ENCODE measurements at regions of chr15 and their contacts with region 1.

Region 1: GRCh38 chr15:42533246-42533645 is 15.3 kb downstream of the LRRC57 start:
- DNase-seq: no peak
- ATAC-seq: no peak
- H3K4me3 ChIP-seq: no peak overlapping the region
- H3K27ac ChIP-seq: no peak overlapping the region
- H3K4me1 ChIP-seq: no peaks in the 10 kb centered on the region
- H3K27me3 ChIP-seq: no peaks in the 10 kb centered on the region
- CTCF ChIP-seq: no peak
- POLR2A ChIP-seq: no peak

Region 2: GRCh38 chr15:42640103-42640502 is 106.9 kb after region 1 on chr15:
- in situ Hi-C with region 1: loop called in 1 of 4 experiments (anchors 10 kb)
- intact Hi-C with region 1: no loop called
- DNase-seq: no peak
- ATAC-seq: no peak
- H3K4me3 ChIP-seq: no peak overlapping the region
- H3K27ac ChIP-seq: no peak overlapping the region
- H3K4me1 ChIP-seq: no peaks in the 10 kb centered on the region
- H3K27me3 ChIP-seq: no peaks in the 10 kb centered on the region
- CTCF ChIP-seq: no peak
- POLR2A ChIP-seq: no peak

Measured in gastrocnemius medialis (tissue), 4 donors.